GM12878 (cell line): ENCODE measurements at regions of chr17 and their contacts with region 1.

Region 1: GRCh38 chr17:2592971-2593820 is at the start of gene PAFAH1B1:
- DNase-seq: peak; percentile 24
- ATAC-seq: peak; percentile 80
- H3K4me3 ChIP-seq: peak within 1 kb of the TSS; percentile 83
- H3K27ac ChIP-seq: peak within 1 kb of the TSS; percentile 89
- H3K4me1 ChIP-seq: no peaks in the 10 kb centered on the region
- H3K27me3 ChIP-seq: no peaks in the 10 kb centered on the region
- CTCF ChIP-seq: peak; percentile 2 to 27 (median 5); a peak in 2 of 6 replicates
- EP300 ChIP-seq: no peak
- POLR2A ChIP-seq: peak; percentile 83
- RAD21 ChIP-seq: no peak
- polyA plus RNA-seq, gene PAFAH1B1: 32.6 to 41.0 TPM

Region 2: GRCh38 chr17:2401426-2402221 is 191.6 kb before region 1 on chr17:
- CTCF ChIA-PET with region 1: no interaction called
- POLR2A ChIA-PET with region 1: no interaction called
- RAD21 ChIA-PET with region 1: no interaction called
- SMC1A ChIA-PET with region 1: no interaction called
- in situ Hi-C with region 1: no loop called
- intact Hi-C with region 1: loop called (anchors 10 kb)
- DNase-seq: peak; percentile 96
- ATAC-seq: peak; percentile 72
- H3K4me3 ChIP-seq: peak overlapping the region; percentile 87
- H3K27ac ChIP-seq: peak overlapping the region; percentile 95
- H3K4me1 ChIP-seq: peaks cover 11% of the 10 kb centered on the region
- H3K27me3 ChIP-seq: no peaks in the 10 kb centered on the region
- CTCF ChIP-seq: no peak
- EP300 ChIP-seq: 0 out of 4 replicates have a peak, but pooled peaks of 1 of the 2 experiments have one; percentile 10
- POLR2A ChIP-seq: 0 out of 2 replicates have a peak, but pooled peaks have one; percentile 41
- RAD21 ChIP-seq: no peak

Region 3: DNA sequence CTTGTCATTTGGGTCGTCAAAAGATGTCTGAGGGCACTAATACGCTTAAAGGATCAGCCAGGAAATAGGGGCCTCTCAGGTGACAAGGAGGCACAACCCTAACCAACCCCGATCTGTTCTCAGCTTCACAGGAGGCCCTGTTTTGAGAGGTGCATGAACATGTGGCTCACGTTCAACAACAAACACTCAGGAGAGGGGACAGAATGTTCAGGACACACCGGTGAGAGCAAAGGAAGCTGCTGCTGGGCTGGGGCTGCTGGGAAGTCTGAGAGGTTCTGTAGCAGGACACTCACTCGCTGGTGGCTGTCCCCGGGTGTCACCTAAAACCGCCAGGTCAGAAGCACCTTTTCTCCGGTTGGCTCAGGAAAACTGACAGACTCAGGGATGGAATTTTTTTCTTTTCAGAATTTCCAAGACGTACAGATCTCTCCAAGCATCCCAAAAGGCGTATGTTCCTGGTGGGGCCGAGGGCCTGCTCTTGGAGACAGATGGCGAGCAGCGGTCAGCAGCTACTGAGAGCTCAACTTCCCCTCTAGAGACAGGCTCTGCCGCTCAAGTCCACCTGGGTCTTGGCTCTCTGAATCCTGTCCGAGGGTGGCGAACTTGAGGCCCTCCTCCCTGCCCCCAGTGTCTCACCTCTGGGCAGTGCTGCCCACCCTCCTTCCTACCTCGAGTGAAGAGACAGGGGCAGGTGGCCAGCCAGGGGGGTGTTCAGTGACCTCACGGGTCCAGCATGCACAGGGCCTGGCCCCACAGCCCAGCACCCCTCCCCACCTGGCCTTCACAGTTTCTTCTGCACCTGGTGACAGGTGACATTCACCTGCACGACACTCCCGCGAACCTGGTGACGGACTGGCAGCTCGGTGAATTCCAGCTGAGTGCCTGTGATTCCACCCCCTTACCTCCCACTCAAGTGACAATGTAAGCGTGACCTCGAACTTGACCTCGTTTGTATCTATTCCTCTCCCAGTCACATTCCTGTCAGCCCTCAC is 95.5 kb after region 1 on chr17:
- CTCF ChIA-PET with region 1: no interaction called
- POLR2A ChIA-PET with region 1: no interaction called
- RAD21 ChIA-PET with region 1: no interaction called
- SMC1A ChIA-PET with region 1: no interaction called
- in situ Hi-C with region 1: no loop called
- intact Hi-C with region 1: no loop called
- DNase-seq: no peak
- ATAC-seq: no peak; the same call in 1 of the 3 replicates
- H3K4me3 ChIP-seq: no peak overlapping the region
- H3K27ac ChIP-seq: no peak overlapping the region
- H3K4me1 ChIP-seq: no peaks in the 10 kb centered on the region
- H3K27me3 ChIP-seq: no peaks in the 10 kb centered on the region
- CTCF ChIP-seq: no peak
- EP300 ChIP-seq: no peak
- POLR2A ChIP-seq: peak; percentile 53
- RAD21 ChIP-seq: no peak